SK-N-SH (cell line): ENCODE measurements at regions of chr19 and their contacts with region 1.

Region 1: GRCh38 chr19:40633207-40633606 is 32.0 kb downstream of the LTBP4 start:
- DNase-seq: no peak
- H3K4me3 ChIP-seq: no peak overlapping the region
- H3K27ac ChIP-seq: no peak overlapping the region
- H3K4me1 ChIP-seq: peaks cover 0 to 3% of the 10 kb centered on the region in 2 experiments; a peak in 1 of 4 replicates
- H3K27me3 ChIP-seq: no peaks in the 10 kb centered on the region
- CTCF ChIP-seq: no peak
- EP300 ChIP-seq: no peak
- RAD21 ChIP-seq: no peak

Region 2: DNA sequence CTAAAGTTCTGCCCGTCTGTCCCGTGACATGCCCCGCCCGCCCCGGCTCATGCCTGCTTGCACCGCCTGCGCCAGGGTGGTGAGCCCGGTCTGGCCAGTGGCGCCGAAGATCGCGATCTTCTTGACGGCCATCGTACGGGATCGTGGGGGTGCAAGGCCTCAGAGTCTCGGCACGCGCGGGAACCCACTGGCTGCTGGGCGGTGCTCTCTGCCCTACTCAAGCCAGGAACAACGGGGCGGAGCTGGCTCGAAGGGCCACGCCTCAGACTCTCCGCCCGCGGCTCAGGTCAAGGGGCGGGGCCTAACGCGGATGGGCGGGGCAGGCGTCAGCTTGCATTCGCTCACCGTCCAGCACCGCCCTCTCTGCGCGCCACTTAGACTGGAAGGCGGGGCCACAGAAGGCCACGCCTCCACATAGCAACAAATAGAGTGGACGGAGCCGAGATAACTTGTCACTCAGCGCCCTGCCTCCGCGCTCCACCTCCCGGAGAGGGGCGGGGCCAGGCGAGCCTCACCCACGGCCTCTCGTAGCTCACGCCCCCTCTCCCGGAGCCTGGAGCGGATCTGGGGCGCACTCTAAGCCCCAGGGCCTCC is 167.6 kb before region 1 on chr19 and contains the start of gene BLVRB:
- CTCF ChIA-PET with region 1: interaction called, 37 read pairs
- POLR2A ChIA-PET with region 1: no interaction called
- DNase-seq: peak; percentile 97
- H3K4me3 ChIP-seq: peak within 1 kb of the TSS; percentile 61 to 79
- H3K27ac ChIP-seq: peak within 1 kb of the TSS; percentile 3 to 79; a peak in 3 of 4 replicates
- H3K4me1 ChIP-seq: peaks cover 5 to 17% of the 10 kb centered on the region in 2 experiments; a peak in 3 of 4 replicates
- H3K27me3 ChIP-seq: no peaks in the 10 kb centered on the region
- CTCF ChIP-seq: no peak
- EP300 ChIP-seq: no peak
- RAD21 ChIP-seq: no peak
- polyA plus RNA-seq, gene BLVRB: 69.7 and 85.9 TPM in 2 replicates

Region 3: GRCh38 chr19:40542202-40542859 is 90.9 kb before region 1 on chr19:
- CTCF ChIA-PET with region 1: interaction called, 28 read pairs
- POLR2A ChIA-PET with region 1: no interaction called
- DNase-seq: peak; percentile 60
- H3K4me3 ChIP-seq: no peak overlapping the region
- H3K27ac ChIP-seq: peak overlapping the region in 1 of 2 experiments; percentile 19; a peak in 1 of 4 replicates
- H3K4me1 ChIP-seq: peaks cover 0 to 13% of the 10 kb centered on the region in 2 experiments; a peak in 1 of 4 replicates
- H3K27me3 ChIP-seq: no peaks in the 10 kb centered on the region
- CTCF ChIP-seq: no peak
- EP300 ChIP-seq: no peak
- RAD21 ChIP-seq: no peak

Region 4: DNA sequence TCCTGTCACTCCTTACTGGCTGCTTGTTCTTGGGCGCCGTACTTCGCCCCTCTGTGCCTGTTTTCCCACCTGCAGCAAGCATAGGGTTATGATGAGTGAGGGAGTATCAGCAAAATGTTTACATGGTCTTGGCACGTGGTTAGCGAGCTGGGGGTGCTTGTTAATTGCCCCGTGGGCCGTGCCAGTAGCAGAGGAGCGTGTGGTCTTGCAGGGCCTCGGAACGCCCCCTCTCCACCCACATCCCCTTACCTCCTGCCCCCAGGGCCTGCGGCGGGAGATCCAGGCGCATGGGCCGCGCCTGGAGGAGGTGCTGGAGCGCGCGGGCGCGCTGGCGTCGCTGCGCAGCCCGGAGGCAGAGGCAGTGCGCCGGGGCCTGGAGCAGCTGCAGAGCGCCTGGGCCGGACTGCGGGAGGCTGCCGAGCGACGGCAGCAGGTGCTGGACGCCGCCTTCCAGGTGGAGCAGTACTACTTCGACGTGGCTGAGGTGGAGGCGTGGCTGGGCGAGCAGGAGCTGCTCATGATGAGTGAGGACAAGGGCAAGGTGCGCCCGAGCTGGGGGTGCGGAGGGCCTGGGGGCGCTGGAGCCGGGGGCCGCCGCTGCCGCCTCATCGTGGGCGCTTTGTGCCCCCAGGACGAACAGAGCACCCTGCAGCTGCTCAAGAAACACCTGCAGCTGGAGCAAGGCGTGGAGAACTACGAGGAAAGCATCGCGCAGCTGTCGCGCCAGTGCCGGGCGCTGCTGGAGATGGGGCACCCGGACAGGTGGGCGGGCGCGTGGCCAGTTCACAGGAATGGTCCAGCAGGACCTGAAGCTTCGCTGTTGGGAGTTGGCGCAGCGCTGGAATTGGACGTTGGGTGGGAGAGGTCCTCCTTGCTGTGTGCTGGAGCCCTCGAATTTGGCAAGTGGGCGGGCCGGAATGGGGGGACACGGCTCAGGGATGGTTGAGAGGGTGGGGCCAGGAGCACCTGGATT is 79.0 kb before region 1 on chr19:
- CTCF ChIA-PET with region 1: interaction called, 28 read pairs
- POLR2A ChIA-PET with region 1: no interaction called
- DNase-seq: no peak
- H3K4me3 ChIP-seq: no peak overlapping the region
- H3K27ac ChIP-seq: no peak overlapping the region
- H3K4me1 ChIP-seq: peaks cover 3 to 4% of the 10 kb centered on the region in 2 experiments; a peak in 1 of 4 replicates
- H3K27me3 ChIP-seq: no peaks in the 10 kb centered on the region; the same call in 1 of the 2 replicates
- CTCF ChIP-seq: no peak
- EP300 ChIP-seq: no peak
- RAD21 ChIP-seq: no peak

Region 5: DNA sequence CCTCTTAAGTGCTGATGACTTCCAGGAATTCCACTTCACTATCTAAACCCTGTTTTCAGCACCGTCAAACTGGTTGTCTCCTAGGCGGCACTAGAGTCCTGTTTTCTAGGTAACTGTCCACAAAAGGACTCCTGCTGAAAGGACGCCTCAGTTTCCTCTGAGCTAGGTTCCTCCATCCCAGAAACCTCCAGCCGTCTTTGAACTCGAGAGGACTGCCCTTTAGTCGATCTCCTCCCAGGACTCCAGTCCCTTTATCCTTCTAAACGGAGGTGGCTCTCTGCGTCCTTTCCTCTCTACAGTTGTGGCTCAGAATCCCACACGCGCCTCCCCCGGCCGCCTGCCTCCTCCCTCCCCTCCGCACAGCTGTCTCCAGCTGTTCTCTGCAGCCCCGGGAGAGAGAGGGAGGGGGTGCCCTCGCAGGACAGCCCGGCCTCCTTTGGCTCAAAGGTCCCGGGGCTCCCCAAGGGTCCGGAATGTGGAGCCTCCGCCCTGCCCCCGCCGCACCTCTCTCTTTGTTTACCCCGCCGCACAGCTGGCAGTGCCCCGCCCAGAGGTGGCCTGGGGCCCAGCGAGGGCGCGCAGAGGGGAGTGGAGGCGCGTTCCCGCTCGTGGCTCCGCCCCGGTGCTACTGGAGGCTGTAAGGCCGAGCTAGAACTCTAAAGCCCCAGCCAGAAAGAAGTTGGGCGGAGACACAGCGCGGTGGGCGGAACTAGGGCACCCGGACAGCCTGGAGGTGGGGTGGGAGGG is 29.6 kb before region 1 on chr19:
- CTCF ChIA-PET with region 1: interaction called, 176 read pairs
- POLR2A ChIA-PET with region 1: no interaction called
- DNase-seq: peak; percentile 93
- H3K4me3 ChIP-seq: peak overlapping the region; percentile 45 to 52; a peak in 3 of 4 replicates
- H3K27ac ChIP-seq: peak overlapping the region in 1 of 2 experiments; percentile 39; a peak in 1 of 4 replicates
- H3K4me1 ChIP-seq: peaks cover 7 to 41% of the 10 kb centered on the region in 2 experiments; a peak in 2 of 4 replicates
- H3K27me3 ChIP-seq: no peaks in the 10 kb centered on the region
- CTCF ChIP-seq: no peak
- EP300 ChIP-seq: no peak
- RAD21 ChIP-seq: no peak

Region 6: GRCh38 chr19:40650749-40651305 is 17.6 kb after region 1 on chr19:
- CTCF ChIA-PET with region 1: interaction called, 20 read pairs
- POLR2A ChIA-PET with region 1: no interaction called
- DNase-seq: no peak
- H3K4me3 ChIP-seq: no peak overlapping the region
- H3K27ac ChIP-seq: no peak overlapping the region
- H3K4me1 ChIP-seq: peaks cover 0 to under 1% of the 10 kb centered on the region in 2 experiments; a peak in 1 of 4 replicates
- H3K27me3 ChIP-seq: no peaks in the 10 kb centered on the region
- CTCF ChIP-seq: no peak
- EP300 ChIP-seq: no peak
- RAD21 ChIP-seq: no peak

Region 7: GRCh38 chr19:40798223-40798996 is 165.2 kb after region 1 on chr19:
- CTCF ChIA-PET with region 1: no interaction called
- POLR2A ChIA-PET with region 1: no interaction called
- DNase-seq: peak; percentile 77
- H3K4me3 ChIP-seq: peak overlapping the region; percentile 50 to 65
- H3K27ac ChIP-seq: peak overlapping the region; percentile 84 to 89
- H3K4me1 ChIP-seq: peaks cover 31 to 37% of the 10 kb centered on the region in 2 experiments; a peak in 2 of 4 replicates
- H3K27me3 ChIP-seq: no peaks in the 10 kb centered on the region
- CTCF ChIP-seq: peak; percentile 65
- EP300 ChIP-seq: no peak
- RAD21 ChIP-seq: peak; percentile 14; the same call in 1 of the 2 replicates